Tibial artery (tissue), 4 donors: ENCODE measurements at regions of chr4 and their contacts with region 1.

Region 1: GRCh38 chr4:2008875-2009703 is at the start of gene NELFA:
- DNase-seq: peak; percentile 92 to 96
- H3K4me3 ChIP-seq: peak within 1 kb of the TSS; percentile 87 to 89
- H3K27ac ChIP-seq: peak within 1 kb of the TSS; percentile 96 to 97
- H3K4me1 ChIP-seq: peaks cover 0 to 35% (median 18%) of the 10 kb centered on the region in 4 donors
- H3K27me3 ChIP-seq: no peaks in the 10 kb centered on the region
- CTCF ChIP-seq: peak; percentile 40 to 56

Region 2: DNA sequence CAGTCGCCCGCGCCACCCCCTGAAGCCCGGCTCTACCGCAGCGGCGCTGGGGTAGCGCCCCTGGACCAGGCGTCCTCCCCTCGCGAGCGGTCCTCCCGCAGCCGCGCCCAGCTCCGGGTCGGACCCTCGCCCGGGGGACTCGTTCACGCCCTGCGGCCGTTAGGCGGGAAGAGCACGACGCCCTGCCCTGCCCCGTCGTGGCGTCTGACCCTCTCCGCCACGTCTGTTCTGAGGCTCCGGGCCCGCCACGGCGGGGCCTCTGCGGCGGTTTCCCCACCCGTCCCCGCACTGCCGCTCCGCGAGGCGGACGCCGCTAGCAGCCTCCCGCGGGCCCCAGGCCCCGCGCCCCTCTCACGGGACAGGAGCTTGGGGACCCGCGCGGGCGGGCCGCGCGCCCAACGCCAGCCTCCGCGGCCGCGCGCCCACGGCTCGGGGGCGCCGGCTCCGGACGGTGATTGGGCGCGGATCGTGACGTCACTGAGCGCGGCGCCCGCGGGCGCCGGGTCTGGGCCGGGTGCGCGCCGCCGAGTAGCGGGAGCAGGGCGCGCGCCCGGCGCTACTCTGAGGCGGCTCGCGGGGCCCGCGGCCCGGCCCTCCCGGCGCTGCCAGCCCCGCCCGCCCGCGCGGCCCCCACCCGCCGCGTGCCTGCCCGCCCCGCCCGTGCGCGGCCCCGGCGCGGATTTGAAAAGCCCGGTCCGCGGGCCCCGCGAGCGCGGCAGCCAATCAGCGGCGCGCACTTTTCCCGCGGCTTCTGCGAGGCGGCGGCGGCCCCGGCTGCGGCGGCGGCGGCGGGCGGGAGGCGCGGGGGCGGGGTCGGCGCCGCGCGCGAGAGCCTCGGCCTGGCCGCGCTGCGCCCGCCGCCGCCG is 138.3 kb before region 1 on chr4 and contains the start of gene NSD2:
- intact Hi-C with region 1: loop called (anchors 10 kb)
- DNase-seq: peak; percentile 78 to 92
- H3K4me3 ChIP-seq: peak within 1 kb of the TSS; percentile 88 to 92
- H3K27ac ChIP-seq: peak within 1 kb of the TSS; percentile 88 to 99
- H3K4me1 ChIP-seq: peaks cover 0 to 26% (median 15%) of the 10 kb centered on the region in 4 donors
- H3K27me3 ChIP-seq: peaks cover 0 to 11% of the 10 kb centered on the region in 2 donors
- CTCF ChIP-seq: no peak

Region 3: GRCh38 chr4:2262143-2262943 is 253.3 kb after region 1 on chr4:
- intact Hi-C with region 1: loop called (anchors 10 kb)
- DNase-seq: peak; percentile 100
- H3K4me3 ChIP-seq: peak overlapping the region; percentile 93 to 95
- H3K27ac ChIP-seq: peak overlapping the region; percentile 95 to 96
- H3K4me1 ChIP-seq: peaks cover 3 to 74% (median 56%) of the 10 kb centered on the region in 4 donors
- H3K27me3 ChIP-seq: peaks cover 0 to 3% of the 10 kb centered on the region in 2 donors
- CTCF ChIP-seq: peak in 1 of 2 experiments; percentile 8